ENCODE measurements at regions of chr6 and their contacts with region 1.

Region 1: GRCh38 chr6:136792410-136793262 is at the start of gene MAP3K5:
- DNase-seq: peak; percentile 96
- H3K4me3 ChIP-seq: peak within 1 kb of the TSS; percentile 80
- H3K27ac ChIP-seq: peak within 1 kb of the TSS; percentile 57
- H3K4me1 ChIP-seq: peaks cover 8% of the 10 kb centered on the region
- H3K27me3 ChIP-seq: no peaks in the 10 kb centered on the region
- CTCF ChIP-seq: peak; percentile 93
- total RNA-seq, gene MAP3K5: 4.9 and 5.4 TPM in 2 replicates

Region 2: GRCh38 chr6:135382182-135382628 is 1410.4 kb before region 1 on chr6:
- CTCF ChIA-PET with region 1: no interaction called
- POLR2A ChIA-PET with region 1: no interaction called
- intact Hi-C with region 1: no loop called
- DNase-seq: no peak
- H3K4me3 ChIP-seq: no peak overlapping the region
- H3K27ac ChIP-seq: no peak overlapping the region
- H3K4me1 ChIP-seq: no peaks in the 10 kb centered on the region
- H3K27me3 ChIP-seq: no peaks in the 10 kb centered on the region
- CTCF ChIP-seq: no peak

Region 3: GRCh38 chr6:136289579-136290409 is 502.8 kb before region 1 on chr6 and contains the start of gene BCLAF1:
- CTCF ChIA-PET with region 1: no interaction called
- POLR2A ChIA-PET with region 1: no interaction called
- intact Hi-C with region 1: loop called (anchors 10 kb)
- DNase-seq: peak; percentile 99
- H3K4me3 ChIP-seq: peak within 1 kb of the TSS; percentile 85
- H3K27ac ChIP-seq: peak within 1 kb of the TSS; percentile 100
- H3K4me1 ChIP-seq: peaks cover 17% of the 10 kb centered on the region
- H3K27me3 ChIP-seq: no peaks in the 10 kb centered on the region
- CTCF ChIP-seq: no peak
- total RNA-seq, gene BCLAF1: 272 and 284 TPM in 2 replicates

Region 4: DNA sequence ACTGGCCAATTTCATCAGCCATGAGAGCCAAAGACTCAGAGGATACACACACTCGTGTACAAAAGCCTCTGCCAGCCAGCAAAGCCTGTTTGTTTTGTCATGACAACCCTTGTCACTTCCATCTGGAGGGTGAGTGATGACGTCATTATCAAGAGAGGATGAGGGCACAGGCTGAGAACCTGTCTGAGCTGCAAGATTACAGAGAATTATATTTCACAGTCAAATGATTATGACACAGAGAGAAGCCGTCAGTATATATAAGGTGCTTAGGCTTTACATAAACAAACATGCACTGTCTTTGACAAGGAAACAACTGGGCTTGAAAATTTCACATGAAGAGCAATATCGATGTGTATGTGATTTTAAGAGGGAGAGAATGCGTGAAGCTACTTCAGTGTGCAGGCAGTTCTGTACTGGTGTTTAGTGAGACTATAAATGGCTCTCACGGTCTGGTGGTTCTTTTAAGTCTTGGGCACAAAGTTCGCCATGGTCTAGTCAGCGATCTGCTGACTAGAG is 466.5 kb before region 1 on chr6:
- CTCF ChIA-PET with region 1: no interaction called
- POLR2A ChIA-PET with region 1: no interaction called
- intact Hi-C with region 1: no loop called
- DNase-seq: no peak
- H3K4me3 ChIP-seq: no peak overlapping the region
- H3K27ac ChIP-seq: no peak overlapping the region
- H3K4me1 ChIP-seq: no peaks in the 10 kb centered on the region
- H3K27me3 ChIP-seq: peaks cover 3% of the 10 kb centered on the region
- CTCF ChIP-seq: no peak

Region 5: GRCh38 chr6:136582711-136583471 is 209.7 kb before region 1 on chr6:
- CTCF ChIA-PET with region 1: no interaction called
- POLR2A ChIA-PET with region 1: no interaction called
- intact Hi-C with region 1: loop called (anchors 2 kb)
- DNase-seq: peak; percentile 65
- H3K4me3 ChIP-seq: no peak overlapping the region
- H3K27ac ChIP-seq: no peak overlapping the region
- H3K4me1 ChIP-seq: no peaks in the 10 kb centered on the region
- H3K27me3 ChIP-seq: no peaks in the 10 kb centered on the region
- CTCF ChIP-seq: peak; percentile 70

Region 6: DNA sequence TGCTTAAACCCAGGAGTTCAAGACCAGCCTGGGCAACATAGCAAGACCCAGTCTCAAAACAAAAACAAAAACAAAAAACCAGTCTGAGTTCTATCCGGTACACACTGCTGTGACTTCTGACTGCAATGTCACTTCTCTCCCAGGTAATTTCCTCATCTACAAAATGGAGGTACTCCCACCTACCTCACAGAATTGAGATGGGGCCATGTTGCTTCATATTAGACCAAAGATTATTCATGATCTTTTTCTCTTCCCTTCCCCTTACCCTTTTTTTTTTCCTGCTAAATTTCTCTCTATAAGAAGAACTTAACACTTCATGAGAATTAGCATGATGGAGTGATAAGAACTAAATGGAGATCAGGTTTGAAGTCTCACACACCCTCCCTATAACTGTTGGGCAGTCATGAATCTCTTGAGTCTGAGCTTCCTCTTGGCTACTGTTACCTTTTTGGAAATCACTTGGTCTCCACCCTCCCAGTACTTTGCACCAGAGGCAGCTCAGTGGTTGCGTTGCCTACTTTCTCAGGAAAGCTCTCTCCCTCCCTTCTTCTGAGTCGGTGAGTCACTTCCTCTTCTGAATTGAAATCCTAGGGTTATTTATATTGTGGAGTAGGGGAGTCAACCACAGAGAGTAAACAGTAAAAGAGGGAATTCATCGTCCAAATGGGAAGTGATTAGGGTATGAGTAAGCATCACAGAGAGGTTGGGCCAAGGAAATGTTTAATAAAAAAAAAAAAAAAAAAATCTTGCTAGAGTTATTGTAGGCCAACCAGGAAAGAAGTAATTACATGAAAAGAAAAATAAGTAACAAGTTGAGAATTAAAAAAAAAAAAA is 182.5 kb before region 1 on chr6:
- CTCF ChIA-PET with region 1: interaction called, 6 read pairs
- POLR2A ChIA-PET with region 1: no interaction called
- intact Hi-C with region 1: loop called (anchors 1 kb)
- DNase-seq: peak; percentile 97
- H3K4me3 ChIP-seq: no peak overlapping the region
- H3K27ac ChIP-seq: peak overlapping the region; percentile 51
- H3K4me1 ChIP-seq: peaks cover 50% of the 10 kb centered on the region
- H3K27me3 ChIP-seq: no peaks in the 10 kb centered on the region
- CTCF ChIP-seq: no peak

Region 7: GRCh38 chr6:136643850-136644596 is 148.6 kb before region 1 on chr6:
- CTCF ChIA-PET with region 1: interaction called, 38 read pairs
- POLR2A ChIA-PET with region 1: no interaction called
- intact Hi-C with region 1: loop called (anchors 1 kb)
- DNase-seq: peak; percentile 82
- H3K4me3 ChIP-seq: no peak overlapping the region
- H3K27ac ChIP-seq: no peak overlapping the region
- H3K4me1 ChIP-seq: peaks cover 9% of the 10 kb centered on the region
- H3K27me3 ChIP-seq: no peaks in the 10 kb centered on the region
- CTCF ChIP-seq: peak; percentile 91

Region 8: DNA sequence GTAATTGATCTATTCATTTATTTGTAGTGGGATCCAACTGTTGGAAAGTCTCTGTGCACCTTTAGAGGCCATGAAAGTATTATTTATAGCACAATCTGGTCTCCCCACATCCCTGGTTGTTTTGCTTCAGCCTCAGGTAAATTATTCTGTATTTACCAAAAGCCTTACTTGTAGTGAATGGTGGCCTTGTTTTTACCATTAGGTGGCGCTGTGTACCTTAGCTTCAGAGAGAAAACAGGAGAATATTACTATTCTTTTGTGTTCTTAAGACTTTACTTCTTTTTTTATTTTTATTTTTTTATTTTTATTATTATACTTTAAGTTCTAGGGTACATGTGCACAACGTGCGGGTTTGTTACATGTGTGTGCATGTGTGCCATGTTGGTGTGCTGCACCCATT is 53.4 kb after region 1 on chr6:
- CTCF ChIA-PET with region 1: no interaction called
- POLR2A ChIA-PET with region 1: no interaction called
- intact Hi-C with region 1: no loop called
- DNase-seq: peak; percentile 56
- H3K4me3 ChIP-seq: no peak overlapping the region
- H3K27ac ChIP-seq: no peak overlapping the region
- H3K4me1 ChIP-seq: no peaks in the 10 kb centered on the region
- H3K27me3 ChIP-seq: no peaks in the 10 kb centered on the region
- CTCF ChIP-seq: peak; percentile 76

Region 9: DNA sequence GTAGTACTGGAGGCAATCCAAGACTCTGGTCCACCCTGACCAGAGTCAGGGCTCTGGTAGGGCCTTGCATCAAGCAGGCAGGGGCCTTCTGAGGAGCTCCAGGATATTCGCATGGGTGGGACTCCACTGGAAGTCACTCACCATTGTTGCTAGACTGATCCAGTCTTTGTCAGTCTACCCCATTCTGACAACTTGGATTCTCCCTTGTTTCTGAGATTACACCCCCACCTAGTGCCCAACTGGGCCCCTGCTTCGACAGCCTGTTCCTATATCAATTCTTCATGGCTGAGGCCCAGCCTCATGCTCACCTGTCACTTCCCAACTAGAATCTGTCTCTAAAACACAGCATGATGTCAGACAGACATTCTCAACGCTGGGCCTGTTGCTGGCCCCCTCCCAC is 134.7 kb after region 1 on chr6:
- CTCF ChIA-PET with region 1: no interaction called
- POLR2A ChIA-PET with region 1: no interaction called
- intact Hi-C with region 1: no loop called
- DNase-seq: peak; percentile 59
- H3K4me3 ChIP-seq: no peak overlapping the region
- H3K27ac ChIP-seq: no peak overlapping the region
- H3K4me1 ChIP-seq: peaks cover 9% of the 10 kb centered on the region
- H3K27me3 ChIP-seq: peaks cover 33% of the 10 kb centered on the region
- CTCF ChIP-seq: peak; percentile 63

Measured in A673 (cell line).